Activated T-helper 1 cell treated with anti-CD3 and anti-CD28 coated beads, Interleukin-12 subunit alpha, Interleukin-12 subunit beta, Interleukin-2, Interleukin-4 antibody, amounts not matched to agents 30 ng/mL and 10 ng/mL and 1 ng/mL, durations not matched to agents 14 hours and 24 hours and 36 hours (primary cell): ENCODE measurements at regions of chr12 and their contacts with region 1.

Region 1: GRCh38 chr12:131132118-131132892 is 178.6 kb downstream of the ADGRD1 start:
- DNase-seq: peak; percentile 29
- H3K4me3 Mint-ChIP-seq: no peak overlapping the region
- H3K27ac Mint-ChIP-seq: no peak overlapping the region
- H3K4me1 Mint-ChIP-seq: no peaks in the 10 kb centered on the region
- H3K27me3 Mint-ChIP-seq: no peaks in the 10 kb centered on the region

Region 2: GRCh38 chr12:130826149-130826801 is 306.0 kb before region 1 on chr12:
- intact Hi-C with region 1: loop called (anchors 2 kb)
- DNase-seq: peak; percentile 40
- H3K4me3 Mint-ChIP-seq: no peak overlapping the region
- H3K27ac Mint-ChIP-seq: peak overlapping the region; percentile 52
- H3K4me1 Mint-ChIP-seq: peaks cover 5% of the 10 kb centered on the region
- H3K27me3 Mint-ChIP-seq: no peaks in the 10 kb centered on the region